Activated CD8-positive, alpha-beta T cell treated with anti-CD3 and anti-CD28 coated beads, Interleukin-2, amount 10 ng/mL, durations not matched to agents 7 days and 5 days (primary cell): ENCODE measurements at regions of chr10 and their contacts with region 1.

Region 1: DNA sequence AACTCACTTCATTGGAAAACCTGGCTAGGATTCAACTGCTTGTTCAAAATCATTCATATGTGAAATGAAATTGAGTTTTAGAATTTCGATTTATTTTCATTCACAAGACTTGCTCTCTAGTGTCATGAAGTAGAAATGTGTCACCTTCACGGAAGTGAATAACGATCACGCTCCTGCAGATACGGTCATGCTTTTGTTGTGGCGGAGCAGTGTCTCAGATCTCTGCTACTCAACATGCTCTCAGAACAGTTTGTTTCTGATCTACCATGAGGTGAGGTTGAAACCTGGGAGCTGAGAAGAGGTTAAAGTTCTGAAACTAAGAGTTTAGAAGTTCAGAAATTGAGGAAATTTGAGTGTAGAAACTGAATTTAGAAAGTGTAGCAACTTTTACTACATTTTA is 13.8 kb upstream of the PITRM1 start:
- DNase-seq: peak; percentile 65
- ATAC-seq: peak; percentile 95
- H3K4me3 Mint-ChIP-seq: no peak overlapping the region
- H3K27ac Mint-ChIP-seq: peak overlapping the region; percentile 50
- H3K4me1 Mint-ChIP-seq: peaks cover 11% of the 10 kb centered on the region
- H3K27me3 Mint-ChIP-seq: peaks cover 28% of the 10 kb centered on the region

Region 2: GRCh38 chr10:3197348-3198003 is 11.1 kb after region 1 on chr10:
- CTCF ChIA-PET with region 1: interaction called, 15 read pairs
- POLR2A ChIA-PET with region 1: no interaction called
- DNase-seq: peak; percentile 87
- ATAC-seq: peak; percentile 78
- H3K4me3 Mint-ChIP-seq: peak overlapping the region; percentile 53
- H3K27ac Mint-ChIP-seq: peak overlapping the region; percentile 64
- H3K4me1 Mint-ChIP-seq: peaks cover 23% of the 10 kb centered on the region
- H3K27me3 Mint-ChIP-seq: peaks cover 69% of the 10 kb centered on the region

Region 3: GRCh38 chr10:3217301-3217700 is 30.9 kb after region 1 on chr10:
- CTCF ChIA-PET with region 1: no interaction called
- POLR2A ChIA-PET with region 1: no interaction called
- DNase-seq: no peak
- ATAC-seq: no peak
- H3K4me3 Mint-ChIP-seq: no peak overlapping the region
- H3K27ac Mint-ChIP-seq: no peak overlapping the region
- H3K4me1 Mint-ChIP-seq: peaks cover 5% of the 10 kb centered on the region
- H3K27me3 Mint-ChIP-seq: peaks cover 21% of the 10 kb centered on the region